Transverse colon (tissue), 4 donors: ENCODE measurements at regions of chr1 and their contacts with region 1.

Region 1: GRCh38 chr1:215022741-215023141 is 59.8 kb upstream of the KCNK2 start:
- DNase-seq: no peak
- H3K4me3 ChIP-seq: no peak overlapping the region
- H3K27ac ChIP-seq: peak overlapping the region in 3 of 4 donors; percentile 1 to 25 (median 20)
- H3K4me1 ChIP-seq: no peaks in the 10 kb centered on the region
- H3K27me3 ChIP-seq: no peaks in the 10 kb centered on the region
- CTCF ChIP-seq: no peak
- EP300 ChIP-seq: no peak
- POLR2A ChIP-seq: no peak

Region 2: DNA sequence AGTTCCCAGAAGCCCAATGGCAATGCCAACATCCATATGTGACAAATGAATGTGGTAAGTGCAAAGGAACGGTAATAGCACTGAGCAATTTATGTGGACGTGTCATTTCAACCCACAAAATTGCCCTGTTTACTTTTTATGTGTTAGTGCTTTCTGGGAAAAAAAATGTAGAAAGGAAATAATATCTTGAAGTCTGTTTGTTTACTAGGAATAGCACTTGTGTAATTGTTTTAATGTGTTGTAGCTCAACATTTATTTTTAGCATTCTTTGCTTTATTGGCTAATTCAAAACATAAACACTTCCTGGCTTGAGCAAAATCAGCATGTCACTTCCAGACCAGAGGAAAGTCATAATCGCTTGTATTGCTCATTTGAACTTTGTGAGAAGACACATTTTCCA is 165.0 kb before region 1 on chr1:
- in situ Hi-C with region 1: no loop called
- intact Hi-C with region 1: no loop called
- DNase-seq: no peak
- H3K4me3 ChIP-seq: no peak overlapping the region
- H3K27ac ChIP-seq: no peak overlapping the region
- H3K4me1 ChIP-seq: no peaks in the 10 kb centered on the region
- H3K27me3 ChIP-seq: no peaks in the 10 kb centered on the region
- CTCF ChIP-seq: no peak
- EP300 ChIP-seq: no peak
- POLR2A ChIP-seq: no peak

Region 3: DNA sequence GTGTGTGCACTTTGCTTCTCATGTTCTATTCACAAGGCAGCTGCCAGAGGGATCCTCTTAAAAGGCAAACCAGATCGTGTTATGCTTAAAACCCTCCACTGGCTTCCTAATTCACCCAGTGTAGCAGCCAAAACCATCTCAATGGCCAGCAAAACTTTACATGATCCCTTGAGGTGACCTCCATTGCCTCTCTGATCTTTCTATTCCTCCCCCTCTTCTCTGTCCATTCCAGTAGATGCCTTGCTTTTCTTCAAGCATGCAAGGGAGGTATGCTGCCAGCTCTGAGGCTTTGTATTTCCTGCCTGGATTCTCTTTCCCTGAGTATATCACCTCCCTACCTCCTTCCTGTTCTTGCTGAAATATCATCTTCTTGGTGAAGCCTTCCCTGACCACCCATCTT is 33.4 kb before region 1 on chr1:
- in situ Hi-C with region 1: no loop called
- intact Hi-C with region 1: loop called (anchors 1 kb)
- DNase-seq: no peak
- H3K4me3 ChIP-seq: no peak overlapping the region
- H3K27ac ChIP-seq: no peak overlapping the region
- H3K4me1 ChIP-seq: no peaks in the 10 kb centered on the region
- H3K27me3 ChIP-seq: no peaks in the 10 kb centered on the region
- CTCF ChIP-seq: no peak
- EP300 ChIP-seq: no peak
- POLR2A ChIP-seq: no peak

Region 4: DNA sequence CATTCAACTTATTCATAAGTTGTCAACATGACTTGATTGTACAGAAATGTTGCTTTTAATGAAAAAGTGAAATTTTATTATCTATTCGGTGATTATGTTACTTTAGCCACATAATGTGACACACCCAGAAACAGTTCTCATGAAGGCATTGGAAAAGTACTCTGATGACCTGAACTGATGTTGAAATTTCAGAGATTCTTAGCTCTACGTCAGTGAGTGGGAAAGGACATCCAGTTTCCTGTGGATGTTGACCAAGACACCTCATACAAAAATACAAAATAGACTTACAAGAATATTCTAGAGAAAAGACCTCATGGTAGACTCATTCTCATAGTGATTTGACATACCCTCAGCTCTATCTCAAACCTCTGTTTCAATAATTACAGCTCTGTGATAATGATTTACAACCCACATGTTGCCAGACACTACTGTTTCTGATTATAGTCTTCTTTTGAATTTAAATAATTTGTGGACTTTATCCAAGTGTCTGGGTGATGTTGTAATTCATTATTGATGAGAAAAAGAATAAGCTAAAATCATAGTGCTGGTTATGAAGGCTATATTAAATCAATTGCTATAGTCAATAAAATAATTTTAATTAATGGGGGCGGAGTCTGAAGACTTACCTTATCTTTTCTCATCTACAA is 97.1 kb after region 1 on chr1:
- in situ Hi-C with region 1: no loop called
- intact Hi-C with region 1: no loop called
- DNase-seq: no peak
- H3K4me3 ChIP-seq: no peak overlapping the region
- H3K27ac ChIP-seq: no peak overlapping the region
- H3K4me1 ChIP-seq: no peaks in the 10 kb centered on the region
- H3K27me3 ChIP-seq: no peaks in the 10 kb centered on the region
- CTCF ChIP-seq: no peak
- EP300 ChIP-seq: no peak
- POLR2A ChIP-seq: no peak